CD14-positive monocyte (primary cell): ENCODE measurements at regions of chrX and their contacts with region 1.

Region 1: DNA sequence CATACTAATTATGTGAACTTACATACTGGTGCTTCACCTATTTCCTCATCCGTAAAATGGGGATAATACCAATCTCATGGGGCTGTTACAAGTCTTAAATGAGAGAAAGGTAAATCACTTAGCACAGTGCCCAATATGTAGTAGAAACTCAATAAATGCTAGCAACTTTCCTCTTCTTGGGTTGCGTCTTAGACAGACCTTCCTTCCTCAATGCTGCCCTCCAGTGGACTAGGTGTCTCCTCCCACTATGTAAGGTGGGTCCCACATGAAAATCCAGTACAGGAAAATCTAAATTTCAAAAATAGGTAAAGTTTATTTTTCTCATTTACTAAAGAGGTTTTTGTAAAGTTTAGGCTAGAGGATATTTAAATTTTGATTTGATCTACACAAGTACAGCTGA is 20.6 kb downstream of the ZDHHC9 start:
- DNase-seq: peak; percentile 38 to 58 (median 57)
- H3K4me3 ChIP-seq: peak overlapping the region in 1 of 3 experiments; percentile 42
- H3K4me3 Mint-ChIP-seq: no peak overlapping the region
- H3K27ac ChIP-seq: peak overlapping the region in 1 of 2 donors; percentile 73
- H3K27ac Mint-ChIP-seq: peak overlapping the region in 6 of 7 donors; percentile 75 to 97 (median 87)
- H3K4me1 ChIP-seq: peaks cover 10 to 12% of the 10 kb centered on the region in 2 donors
- H3K4me1 Mint-ChIP-seq: peaks cover 11% of the 10 kb centered on the region
- H3K27me3 ChIP-seq: no peaks in the 10 kb centered on the region
- H3K27me3 Mint-ChIP-seq: no peaks in the 10 kb centered on the region
- CTCF ChIP-seq: peak; percentile 76

Region 2: DNA sequence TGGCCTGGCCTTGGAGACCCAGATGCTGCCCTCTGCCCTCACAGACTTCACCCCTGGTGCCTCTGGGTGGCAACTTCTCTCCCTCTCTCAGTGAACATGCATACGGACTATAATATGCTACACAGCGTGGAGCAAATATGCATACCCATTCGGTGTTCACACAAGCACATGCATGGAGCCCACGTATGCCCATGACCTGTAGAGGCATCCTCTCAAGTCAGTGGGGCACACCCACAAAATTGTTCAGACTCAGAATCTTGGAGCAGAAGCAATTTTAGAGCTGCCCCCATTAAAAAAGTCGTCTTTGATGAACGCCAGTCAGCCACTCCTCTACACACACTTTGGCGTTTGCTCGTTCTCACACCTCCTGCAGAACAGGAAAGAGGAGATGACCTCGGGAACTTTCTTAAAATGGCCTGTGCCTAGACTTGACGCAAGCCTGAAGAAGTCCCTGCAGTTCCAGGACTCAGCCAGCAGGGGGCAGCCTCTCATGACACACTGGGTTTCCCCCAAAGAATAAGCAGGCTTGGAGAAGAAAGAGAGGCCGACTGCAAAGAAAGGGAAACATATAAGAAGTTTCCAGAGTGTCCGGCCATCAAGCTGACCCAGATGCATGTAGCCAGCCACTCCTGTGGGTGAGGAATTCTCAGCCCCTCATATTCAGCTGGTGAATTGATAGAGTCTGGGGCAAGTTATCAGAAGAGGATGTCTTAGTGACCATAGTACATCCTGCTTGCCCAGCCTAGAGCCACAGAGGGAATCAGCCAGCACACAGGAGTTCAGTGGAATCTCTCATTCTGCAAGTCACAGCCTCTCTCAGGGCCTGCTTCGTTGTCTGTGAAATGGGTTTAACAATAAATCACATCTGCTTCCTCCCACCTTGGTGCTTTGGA is 185.7 kb before region 1 on chrX:
- intact Hi-C with region 1: loop called in 1 of 2 experiments (anchors 10 kb)
- DNase-seq: peak; percentile 52 to 71 (median 58)
- H3K4me3 ChIP-seq: no peak overlapping the region
- H3K4me3 Mint-ChIP-seq: no peak overlapping the region
- H3K27ac ChIP-seq: no peak overlapping the region
- H3K27ac Mint-ChIP-seq: no peak overlapping the region
- H3K4me1 ChIP-seq: peaks cover 9 to 17% of the 10 kb centered on the region in 2 donors
- H3K4me1 Mint-ChIP-seq: peaks cover 13% of the 10 kb centered on the region
- H3K27me3 ChIP-seq: no peaks in the 10 kb centered on the region
- H3K27me3 Mint-ChIP-seq: peaks cover 0 to 4% (median 2%) of the 10 kb centered on the region in 3 donors
- CTCF ChIP-seq: peak; percentile 77

Region 3: DNA sequence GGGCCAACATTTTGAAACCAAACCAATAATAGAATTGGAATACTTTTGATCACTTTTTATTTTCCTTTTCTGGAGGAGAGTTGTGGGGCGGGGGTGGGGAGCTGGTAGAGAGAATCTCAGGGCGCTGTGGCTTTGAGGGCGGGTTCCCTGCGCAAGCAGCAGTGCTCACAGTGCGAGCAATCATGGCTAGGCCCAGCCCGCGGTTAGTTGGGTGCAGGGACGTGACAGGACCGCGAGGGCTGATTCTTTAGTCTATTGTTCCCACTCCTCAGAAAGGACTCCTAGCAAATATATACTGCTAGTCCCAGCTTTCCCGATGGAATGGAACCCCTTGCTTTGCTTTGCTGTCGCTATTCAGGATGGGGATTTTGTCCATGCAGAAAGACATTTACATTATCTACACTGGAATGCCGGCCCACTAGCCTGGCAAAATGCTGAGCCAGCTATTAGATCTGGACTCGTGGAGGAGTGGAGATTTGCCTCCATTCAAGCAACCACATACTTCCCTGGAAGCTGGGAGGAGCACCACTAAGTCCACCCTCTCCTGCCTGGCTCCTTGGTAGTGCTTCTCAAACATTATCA is 144.4 kb before region 1 on chrX:
- intact Hi-C with region 1: no loop called
- DNase-seq: no peak
- H3K4me3 ChIP-seq: peak overlapping the region; percentile 36 to 75 (median 42)
- H3K4me3 Mint-ChIP-seq: peak overlapping the region; percentile 68 to 86
- H3K27ac ChIP-seq: peak overlapping the region in 1 of 2 donors; percentile 65
- H3K27ac Mint-ChIP-seq: peak overlapping the region in 1 of 7 donors; percentile 70
- H3K4me1 ChIP-seq: peaks cover 15% of the 10 kb centered on the region in 2 donors
- H3K4me1 Mint-ChIP-seq: peaks cover 16% of the 10 kb centered on the region
- H3K27me3 ChIP-seq: no peaks in the 10 kb centered on the region
- H3K27me3 Mint-ChIP-seq: peaks cover 0 to 11% (median 2%) of the 10 kb centered on the region in 3 donors
- CTCF ChIP-seq: no peak

Region 4: GRCh38 chrX:129716507-129716906 is 106.6 kb before region 1 on chrX:
- intact Hi-C with region 1: no loop called
- DNase-seq: no peak
- H3K4me3 ChIP-seq: no peak overlapping the region
- H3K4me3 Mint-ChIP-seq: no peak overlapping the region
- H3K27ac ChIP-seq: no peak overlapping the region
- H3K27ac Mint-ChIP-seq: no peak overlapping the region
- H3K4me1 ChIP-seq: peaks cover 6 to 8% of the 10 kb centered on the region in 2 donors
- H3K4me1 Mint-ChIP-seq: peaks cover 6% of the 10 kb centered on the region
- H3K27me3 ChIP-seq: no peaks in the 10 kb centered on the region
- H3K27me3 Mint-ChIP-seq: peaks cover 0 to 5% (median 1%) of the 10 kb centered on the region in 3 donors
- CTCF ChIP-seq: no peak

Region 5: GRCh38 chrX:129781134-129781672 is 41.9 kb before region 1 on chrX:
- intact Hi-C with region 1: loop called in 1 of 2 experiments (anchors 5 kb)
- DNase-seq: peak; percentile 82 to 83 (median 83)
- H3K4me3 ChIP-seq: peak overlapping the region; percentile 57 to 97 (median 67)
- H3K4me3 Mint-ChIP-seq: peak overlapping the region; percentile 95 to 96
- H3K27ac ChIP-seq: peak overlapping the region; percentile 91 to 96
- H3K27ac Mint-ChIP-seq: peak overlapping the region; percentile 93 to 99 (median 96)
- H3K4me1 ChIP-seq: peaks cover 81 to 82% of the 10 kb centered on the region in 2 donors
- H3K4me1 Mint-ChIP-seq: peaks cover 73% of the 10 kb centered on the region
- H3K27me3 ChIP-seq: no peaks in the 10 kb centered on the region
- H3K27me3 Mint-ChIP-seq: peaks cover 0 to 13% (median 0%) of the 10 kb centered on the region in 3 donors
- CTCF ChIP-seq: no peak